BJ (cell line): ENCODE measurements at regions of chr1 and their contacts with region 1.

Region 1: DNA sequence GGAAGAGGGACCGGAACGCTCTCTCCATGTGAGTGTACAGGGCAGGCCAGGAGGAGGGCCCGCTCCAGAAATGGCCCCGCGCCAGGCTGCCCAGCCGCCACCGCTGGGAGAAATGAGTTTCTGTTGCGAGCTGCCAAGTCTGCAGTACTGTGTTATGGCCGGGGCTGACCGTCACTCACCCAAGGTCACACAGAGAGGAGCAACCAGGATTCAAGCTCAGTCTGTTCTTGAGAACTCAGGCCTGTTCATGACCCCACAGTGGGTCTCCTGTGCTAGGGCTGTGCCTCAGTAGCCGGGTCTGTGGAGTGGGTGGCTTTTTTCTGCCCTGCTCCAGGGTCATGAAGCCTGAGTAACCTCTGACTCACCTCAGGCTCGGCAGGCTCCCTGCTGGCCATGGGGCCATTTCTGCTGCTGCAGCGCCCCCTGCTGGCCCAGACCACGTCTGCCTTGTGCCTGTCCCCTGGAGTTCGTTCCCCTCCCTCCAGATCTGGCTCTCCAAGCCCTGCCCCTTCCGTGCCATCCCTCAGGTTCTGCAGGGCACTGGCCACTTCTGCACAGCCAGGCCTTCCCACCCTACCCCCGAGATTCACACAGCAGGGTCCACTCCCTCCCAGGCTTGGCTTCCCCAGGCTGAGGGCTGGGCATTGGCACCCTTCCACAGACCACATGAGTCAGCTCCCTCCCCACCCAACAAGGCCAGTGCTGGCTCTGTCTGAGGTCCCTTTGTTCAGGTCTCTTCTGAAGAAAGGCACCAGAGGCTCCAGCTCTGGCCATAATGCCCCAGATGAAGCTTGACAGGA is 51.8 kb downstream of the EDN2 start:
- DNase-seq: no peak
- H3K4me3 ChIP-seq: no peak overlapping the region
- H3K27me3 ChIP-seq: peaks cover 4% of the 10 kb centered on the region
- CTCF ChIP-seq: peak; percentile 92

Region 2: DNA sequence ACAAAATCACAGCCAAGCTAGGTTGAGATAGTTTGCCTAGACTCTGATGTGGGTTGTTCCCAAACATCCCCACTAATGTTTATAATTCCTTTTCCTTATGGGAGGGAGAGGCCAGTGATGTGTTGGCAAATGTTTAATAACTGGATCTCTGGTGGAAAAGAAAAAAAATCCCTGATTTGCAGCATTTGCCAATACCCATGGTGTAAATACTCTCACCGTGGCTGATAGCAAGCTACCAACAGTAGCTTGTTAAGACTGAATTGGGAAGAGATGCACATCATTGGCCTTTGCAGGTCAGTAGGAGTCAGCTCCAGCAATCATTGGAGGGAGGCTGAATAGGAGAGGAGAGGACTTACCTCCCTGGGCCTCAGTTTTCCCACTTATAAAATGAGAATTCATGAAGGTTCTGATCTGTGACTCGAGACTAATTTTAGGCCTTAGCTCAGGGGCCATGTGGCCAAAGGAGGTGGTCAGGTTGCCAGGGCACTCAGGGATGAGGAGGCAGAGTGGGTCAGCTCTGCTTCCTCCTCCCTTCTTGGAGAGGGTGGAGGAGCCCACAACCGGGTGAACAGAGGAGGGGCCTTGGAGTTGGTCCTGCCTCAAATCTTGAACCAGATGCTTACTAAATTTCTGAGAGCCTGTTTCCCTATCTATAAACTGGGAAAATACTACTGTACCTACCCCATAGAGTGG is 170.6 kb before region 1 on chr1:
- CTCF ChIA-PET with region 1: interaction called, 12 read pairs
- POLR2A ChIA-PET with region 1: no interaction called
- DNase-seq: no peak
- H3K4me3 ChIP-seq: no peak overlapping the region
- H3K27me3 ChIP-seq: no peaks in the 10 kb centered on the region
- CTCF ChIP-seq: no peak

Region 3: DNA sequence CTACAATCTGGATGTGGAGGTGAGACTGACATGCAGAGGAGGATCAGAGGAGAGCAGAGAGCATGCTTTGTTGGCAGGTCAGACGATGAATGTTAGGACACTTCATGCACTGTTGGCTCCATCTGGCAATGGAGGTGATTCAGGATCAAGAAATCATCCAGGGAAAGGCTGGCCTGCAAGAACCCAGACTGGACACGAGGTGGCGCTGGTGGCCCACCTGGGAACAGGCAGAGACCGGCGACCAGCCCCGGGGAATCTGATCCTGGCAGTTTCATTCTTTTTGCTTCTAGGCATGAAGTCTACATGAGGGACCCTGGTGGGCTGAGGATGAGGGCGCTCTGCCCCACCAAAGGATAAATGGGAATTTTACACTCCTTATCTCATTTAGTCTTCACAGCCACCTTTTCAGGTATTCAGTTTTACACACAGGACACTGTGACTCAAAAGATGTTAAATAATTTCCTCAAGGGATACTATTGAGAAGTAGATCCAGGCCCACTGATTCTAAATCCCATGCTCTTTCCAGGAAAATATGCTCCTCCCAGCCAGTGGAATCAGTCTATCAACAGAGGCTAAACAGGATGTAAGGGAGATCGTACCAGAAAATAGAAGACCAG is 164.4 kb before region 1 on chr1:
- CTCF ChIA-PET with region 1: interaction called, 11 read pairs
- POLR2A ChIA-PET with region 1: no interaction called
- DNase-seq: peak; percentile 9
- H3K4me3 ChIP-seq: no peak overlapping the region
- H3K27me3 ChIP-seq: peaks cover 4% of the 10 kb centered on the region
- CTCF ChIP-seq: peak; percentile 98

Region 4: DNA sequence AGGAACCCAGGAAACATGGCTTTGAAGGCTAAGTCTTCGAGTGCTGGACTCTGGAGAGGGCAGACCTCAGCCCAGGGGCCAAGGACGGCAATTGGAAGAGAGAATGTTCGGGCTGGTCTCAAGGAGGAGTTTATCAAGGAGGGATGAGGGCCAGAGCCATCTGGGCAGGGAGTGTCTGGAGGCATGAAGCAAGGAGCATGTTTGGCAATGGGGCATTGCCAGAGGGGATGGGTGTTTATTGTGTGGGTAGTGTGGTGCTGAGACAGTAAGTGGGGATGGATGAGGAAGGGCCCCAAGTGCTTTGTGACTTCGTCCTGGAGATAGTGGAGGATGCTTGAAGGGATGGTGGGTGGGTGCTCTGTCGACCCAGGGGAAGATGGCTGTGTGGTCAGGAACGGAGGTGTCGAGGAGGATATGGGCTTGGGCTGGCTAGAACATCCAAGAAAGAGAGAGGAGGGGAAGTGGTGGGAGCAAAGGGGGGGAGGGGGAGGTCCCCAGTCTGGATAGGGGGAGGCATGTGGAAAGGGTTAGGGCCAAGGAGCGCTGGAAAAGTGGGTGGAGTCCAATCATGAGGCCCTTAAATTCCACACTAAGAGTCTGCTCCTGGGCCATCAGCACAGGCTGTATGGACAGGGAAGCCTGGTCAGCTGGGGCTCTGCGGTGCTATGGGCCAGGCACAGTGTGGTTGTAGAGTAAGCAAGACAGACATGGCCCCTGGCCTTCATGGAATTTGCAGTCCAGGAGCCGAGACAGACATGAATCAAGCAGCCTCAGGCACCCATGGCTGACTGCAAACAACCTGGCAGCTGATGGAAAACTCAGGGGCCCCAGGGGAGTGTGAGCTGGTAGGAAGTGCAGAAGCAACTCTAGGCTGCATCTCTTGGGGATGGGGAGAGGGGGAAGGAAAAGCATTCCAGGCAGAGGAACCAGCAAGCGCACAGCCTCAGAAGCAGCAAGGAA is 15.4 kb after region 1 on chr1:
- CTCF ChIA-PET with region 1: interaction called, 27 read pairs
- POLR2A ChIA-PET with region 1: no interaction called
- DNase-seq: no peak
- H3K4me3 ChIP-seq: no peak overlapping the region
- H3K27me3 ChIP-seq: peaks cover 4% of the 10 kb centered on the region
- CTCF ChIP-seq: no peak